ENCODE measurements at regions of chr4 and their contacts with region 1.

Region 1: DNA sequence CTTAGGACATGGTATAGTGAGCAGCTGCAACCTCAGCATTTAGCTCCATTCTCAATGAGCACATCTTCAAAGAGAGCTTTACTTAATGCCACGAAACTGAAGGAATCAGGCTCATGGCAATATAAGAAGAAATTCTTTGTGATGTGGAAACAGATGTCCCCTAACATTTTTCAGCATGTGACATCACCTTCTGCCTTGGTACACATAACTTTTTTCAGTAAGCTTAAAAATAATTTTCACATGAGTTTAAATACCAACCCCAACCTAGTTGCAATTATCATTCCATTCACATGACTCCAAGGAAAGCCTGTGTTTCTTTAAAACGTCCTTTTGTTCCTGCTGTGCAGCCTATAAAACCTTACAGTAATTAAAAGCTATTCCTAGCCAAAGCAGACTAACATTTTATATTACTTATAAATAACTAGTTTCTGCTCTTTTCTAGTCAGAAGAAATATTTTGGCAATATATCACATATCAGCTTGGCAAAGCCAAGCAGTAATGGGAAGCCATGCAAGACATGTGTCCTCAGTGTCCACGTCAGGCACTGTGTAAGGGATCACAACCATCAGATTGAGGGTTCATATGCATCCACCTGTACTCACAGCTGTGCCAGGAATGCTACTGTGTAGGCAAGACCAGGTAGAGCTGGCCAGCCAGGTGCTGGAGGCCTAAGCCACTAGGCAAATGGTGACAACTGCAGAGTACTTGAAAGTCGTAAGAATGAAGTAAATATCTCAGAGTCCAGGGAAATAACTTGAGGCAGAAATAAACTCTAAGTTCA is 466.6 kb downstream of the INPP4B start:
- DNase-seq: no peak
- H3K4me3 Mint-ChIP-seq: no peak overlapping the region
- H3K27ac Mint-ChIP-seq: peak overlapping the region; percentile 76
- H3K4me1 Mint-ChIP-seq: peaks cover 71% of the 10 kb centered on the region
- H3K27me3 Mint-ChIP-seq: no peaks in the 10 kb centered on the region

Region 2: DNA sequence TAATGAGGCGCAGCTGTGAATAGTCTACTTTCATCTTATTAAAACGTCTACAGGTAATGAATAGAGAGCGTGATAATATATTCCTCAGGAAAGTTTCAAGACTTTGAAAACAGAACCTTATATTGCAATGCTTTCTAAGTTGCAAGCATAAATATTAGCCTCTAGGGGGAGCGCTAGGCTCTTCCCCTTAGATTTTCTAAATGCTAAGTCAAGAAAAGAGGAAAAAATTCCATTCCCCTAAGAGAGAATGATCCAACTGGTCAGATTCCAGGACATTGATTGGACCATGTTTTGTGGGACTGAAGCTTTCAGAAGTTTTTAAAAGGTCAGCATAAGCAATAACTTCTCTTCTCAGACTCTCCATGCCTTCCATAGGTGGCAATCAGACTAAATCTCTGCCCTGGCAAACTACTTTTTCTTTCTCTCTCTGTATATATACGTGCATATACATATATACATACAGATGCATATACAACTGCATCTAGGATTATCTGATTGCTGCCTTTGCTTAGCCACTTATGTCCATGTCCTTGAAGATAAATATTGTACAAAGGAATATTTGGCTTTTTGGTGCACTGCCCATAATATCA is 26.2 kb before region 1 on chr4:
- intact Hi-C with region 1: loop called (anchors 1 kb)
- DNase-seq: no peak
- H3K4me3 Mint-ChIP-seq: peak overlapping the region; percentile 15
- H3K27ac Mint-ChIP-seq: peak overlapping the region; percentile 88
- H3K4me1 Mint-ChIP-seq: peaks cover 89% of the 10 kb centered on the region
- H3K27me3 Mint-ChIP-seq: no peaks in the 10 kb centered on the region

Region 3: DNA sequence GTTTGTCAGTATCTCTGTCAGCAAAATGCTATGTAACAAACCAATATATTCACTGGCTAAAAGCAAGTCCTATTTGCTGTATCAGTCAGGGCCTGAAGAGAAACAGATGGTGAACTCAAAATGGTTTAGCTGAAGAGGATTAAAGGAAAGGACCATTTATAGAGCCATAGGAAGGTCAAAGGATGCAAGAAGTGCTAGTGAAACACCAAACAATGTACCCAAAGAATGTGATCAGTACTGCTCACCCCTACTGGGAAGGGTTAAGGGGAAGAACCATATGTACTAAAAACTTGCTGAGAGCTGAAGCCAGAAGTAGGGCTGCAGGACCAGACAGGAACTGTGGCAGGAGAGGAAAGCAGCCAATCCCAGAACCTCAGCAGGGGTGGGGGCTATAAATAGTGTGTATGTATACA is 12.7 kb before region 1 on chr4:
- intact Hi-C with region 1: loop called (anchors 1 kb)
- DNase-seq: no peak
- H3K4me3 Mint-ChIP-seq: no peak overlapping the region
- H3K27ac Mint-ChIP-seq: peak overlapping the region; percentile 54
- H3K4me1 Mint-ChIP-seq: peaks cover 64% of the 10 kb centered on the region
- H3K27me3 Mint-ChIP-seq: no peaks in the 10 kb centered on the region

Region 4: DNA sequence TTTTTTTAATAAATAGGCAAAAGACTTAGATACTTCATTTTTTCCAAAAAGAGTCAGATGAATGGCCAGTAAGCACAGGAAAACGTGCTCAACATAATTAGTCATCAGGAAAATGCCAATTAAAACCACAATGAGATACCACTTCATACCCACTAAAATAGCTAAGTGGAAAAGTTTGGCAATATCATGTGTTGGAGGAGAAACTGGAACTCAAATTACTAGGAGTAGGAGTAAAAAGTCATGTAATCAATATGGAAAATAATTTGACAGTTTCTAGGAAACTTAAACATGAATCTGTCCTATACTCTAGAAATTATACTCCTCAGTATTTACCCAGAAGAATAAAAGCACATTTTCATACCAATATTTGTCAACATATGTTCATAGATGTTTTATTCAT is 16.8 kb after region 1 on chr4:
- intact Hi-C with region 1: loop called (anchors 1 kb)
- DNase-seq: no peak
- H3K4me3 Mint-ChIP-seq: peak overlapping the region; percentile 68
- H3K27ac Mint-ChIP-seq: peak overlapping the region; percentile 93
- H3K4me1 Mint-ChIP-seq: peaks cover 63% of the 10 kb centered on the region
- H3K27me3 Mint-ChIP-seq: no peaks in the 10 kb centered on the region

Region 5: DNA sequence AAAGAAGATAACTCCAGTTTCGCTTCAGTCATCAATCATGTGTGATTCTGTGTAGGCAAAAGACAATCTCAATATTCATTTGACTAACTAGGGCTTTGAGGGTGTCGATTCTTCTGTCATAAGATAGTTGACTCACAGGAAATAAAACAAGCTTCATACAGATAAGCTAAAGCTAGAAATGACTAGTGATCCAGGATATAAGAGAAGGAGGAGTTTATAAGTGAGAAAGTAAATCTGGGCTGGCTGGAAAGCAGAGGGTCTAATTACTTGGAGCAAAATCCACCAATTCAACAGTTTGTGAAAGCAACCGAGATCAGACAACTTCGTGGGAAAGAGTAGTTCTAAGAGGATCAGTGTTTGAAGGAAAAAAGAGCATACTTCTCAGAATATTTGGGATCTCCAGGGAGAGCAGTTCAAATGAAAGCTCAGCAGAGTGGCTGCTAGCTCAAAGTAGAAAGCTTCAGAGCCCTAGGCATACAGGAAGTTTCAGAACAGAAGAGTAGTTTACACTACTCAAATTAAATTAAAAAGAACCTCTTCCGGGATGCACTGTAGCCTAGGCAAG is 37.3 kb after region 1 on chr4:
- intact Hi-C with region 1: loop called (anchors 1 kb)
- DNase-seq: no peak
- H3K4me3 Mint-ChIP-seq: peak overlapping the region; percentile 76
- H3K27ac Mint-ChIP-seq: peak overlapping the region; percentile 98
- H3K4me1 Mint-ChIP-seq: peaks cover 49% of the 10 kb centered on the region
- H3K27me3 Mint-ChIP-seq: no peaks in the 10 kb centered on the region

Region 6: GRCh38 chr4:142474335-142475087 is 95.0 kb after region 1 on chr4:
- intact Hi-C with region 1: no loop called
- DNase-seq: no peak
- H3K4me3 Mint-ChIP-seq: no peak overlapping the region
- H3K27ac Mint-ChIP-seq: no peak overlapping the region
- H3K4me1 Mint-ChIP-seq: peaks cover 23% of the 10 kb centered on the region
- H3K27me3 Mint-ChIP-seq: no peaks in the 10 kb centered on the region

Region 7: DNA sequence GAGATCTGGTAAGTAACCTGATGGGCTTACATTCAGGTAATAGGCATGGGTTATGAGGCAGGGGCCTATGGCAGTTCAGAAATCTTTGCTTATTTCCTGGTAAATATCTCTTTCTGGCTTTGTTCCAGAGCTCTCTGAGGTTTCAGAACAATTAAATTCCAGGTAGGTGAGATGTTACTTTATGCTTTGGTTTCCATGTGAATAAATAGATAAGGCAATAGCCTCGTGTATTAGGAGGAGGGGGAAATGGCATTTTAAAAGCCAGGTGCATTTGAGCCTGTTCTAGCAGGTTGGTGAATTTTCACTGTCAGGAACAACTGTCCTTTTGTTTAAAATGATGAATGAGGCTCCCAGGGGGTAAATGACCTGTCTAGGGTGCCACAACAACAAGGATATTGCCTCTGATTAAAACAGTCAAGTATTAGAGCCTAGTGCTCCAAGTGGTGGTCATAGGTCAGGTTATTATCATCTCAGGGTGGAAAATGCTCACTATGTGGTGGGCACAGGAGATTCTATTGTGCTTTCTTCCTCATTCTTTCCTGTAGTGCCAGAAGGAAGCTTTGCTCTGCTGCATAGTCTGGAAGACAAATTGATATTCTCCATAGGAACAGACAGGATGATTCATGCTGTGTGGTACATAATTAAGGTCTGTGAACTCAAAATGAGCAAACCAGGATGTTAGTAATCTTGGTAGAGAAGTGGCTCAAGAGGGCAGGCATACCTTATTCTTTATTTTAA is 170.4 kb after region 1 on chr4:
- intact Hi-C with region 1: loop called (anchors 1 kb)
- DNase-seq: no peak
- H3K4me3 Mint-ChIP-seq: no peak overlapping the region
- H3K27ac Mint-ChIP-seq: peak overlapping the region; percentile 68
- H3K4me1 Mint-ChIP-seq: peaks cover 59% of the 10 kb centered on the region
- H3K27me3 Mint-ChIP-seq: no peaks in the 10 kb centered on the region

Region 8: DNA sequence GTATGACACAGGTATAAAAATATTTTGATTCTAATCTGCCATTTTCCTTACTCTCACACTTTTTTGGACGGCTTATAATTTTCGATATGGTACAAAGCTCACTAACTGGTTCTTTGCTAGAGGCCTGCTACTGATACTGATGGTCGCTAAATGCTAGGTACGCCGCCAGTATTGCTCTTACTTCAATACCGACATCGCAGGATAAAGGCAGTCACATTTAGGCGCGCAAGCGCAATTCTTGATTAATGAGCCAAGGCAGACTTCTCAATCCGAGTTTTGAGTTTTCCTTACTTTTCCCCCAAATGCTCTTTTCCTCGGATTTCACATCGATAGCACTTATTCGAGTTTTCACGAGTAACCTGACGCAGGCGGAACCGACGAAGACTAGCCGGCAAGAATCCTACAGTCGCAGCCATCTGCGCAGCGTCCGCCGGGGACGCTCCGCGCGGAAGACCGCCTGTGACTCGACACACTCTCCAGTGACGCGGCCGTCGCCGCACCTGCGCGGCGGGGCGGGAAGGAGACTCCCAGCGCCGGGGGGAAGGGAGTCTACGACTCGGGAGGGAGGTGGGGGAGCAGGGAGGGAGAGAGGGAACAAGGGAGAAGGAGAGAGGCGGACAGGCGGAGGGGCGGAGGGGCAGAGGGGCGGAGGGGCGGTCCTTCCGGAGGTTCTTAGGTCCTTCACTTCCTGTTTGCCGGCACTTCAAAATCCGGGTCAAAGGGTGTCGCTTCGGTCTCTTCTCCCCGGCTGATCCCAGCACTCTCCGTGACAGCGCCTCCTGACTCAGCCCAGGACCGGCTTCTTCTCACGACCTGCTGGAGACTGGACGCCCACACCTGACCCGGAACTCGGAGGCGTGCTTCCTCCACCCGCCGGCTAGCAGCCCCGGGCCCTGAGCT is 805.0 kb after region 1 on chr4 and contains the start of gene USP38:
- intact Hi-C with region 1: loop called (anchors 10 kb)
- DNase-seq: peak; percentile 81
- H3K4me3 Mint-ChIP-seq: peak within 1 kb of the TSS; percentile 89
- H3K27ac Mint-ChIP-seq: peak within 1 kb of the TSS; percentile 96
- H3K4me1 Mint-ChIP-seq: peaks cover 31% of the 10 kb centered on the region
- H3K27me3 Mint-ChIP-seq: no peaks in the 10 kb centered on the region
- total RNA-seq, gene USP38: 23.5 and 26.2 TPM in 2 replicates